ENCODE measurements at regions of chr11 and their contacts with region 1.

Region 1: GRCh38 chr11:120303004-120303637 is 22.0 kb upstream of the TLCD5 start:
- DNase-seq: peak; percentile 84
- ATAC-seq: peak; percentile 91
- H3K4me3 Mint-ChIP-seq: no peak overlapping the region
- H3K27ac Mint-ChIP-seq: no peak overlapping the region
- H3K4me1 Mint-ChIP-seq: no peaks in the 10 kb centered on the region
- H3K27me3 Mint-ChIP-seq: peaks cover 28% of the 10 kb centered on the region

Region 2: GRCh38 chr11:120137611-120138521 is 165.3 kb before region 1 on chr11 and contains the start of gene TRIM29:
- CTCF ChIA-PET with region 1: no interaction called
- POLR2A ChIA-PET with region 1: no interaction called
- DNase-seq: peak; percentile 16
- ATAC-seq: no peak
- H3K4me3 Mint-ChIP-seq: no peak within 1 kb of the TSS
- H3K27ac Mint-ChIP-seq: no peak within 1 kb of the TSS
- H3K4me1 Mint-ChIP-seq: no peaks in the 10 kb centered on the region
- H3K27me3 Mint-ChIP-seq: no peaks in the 10 kb centered on the region
- total RNA-seq, gene TRIM29: not detected

Region 3: DNA sequence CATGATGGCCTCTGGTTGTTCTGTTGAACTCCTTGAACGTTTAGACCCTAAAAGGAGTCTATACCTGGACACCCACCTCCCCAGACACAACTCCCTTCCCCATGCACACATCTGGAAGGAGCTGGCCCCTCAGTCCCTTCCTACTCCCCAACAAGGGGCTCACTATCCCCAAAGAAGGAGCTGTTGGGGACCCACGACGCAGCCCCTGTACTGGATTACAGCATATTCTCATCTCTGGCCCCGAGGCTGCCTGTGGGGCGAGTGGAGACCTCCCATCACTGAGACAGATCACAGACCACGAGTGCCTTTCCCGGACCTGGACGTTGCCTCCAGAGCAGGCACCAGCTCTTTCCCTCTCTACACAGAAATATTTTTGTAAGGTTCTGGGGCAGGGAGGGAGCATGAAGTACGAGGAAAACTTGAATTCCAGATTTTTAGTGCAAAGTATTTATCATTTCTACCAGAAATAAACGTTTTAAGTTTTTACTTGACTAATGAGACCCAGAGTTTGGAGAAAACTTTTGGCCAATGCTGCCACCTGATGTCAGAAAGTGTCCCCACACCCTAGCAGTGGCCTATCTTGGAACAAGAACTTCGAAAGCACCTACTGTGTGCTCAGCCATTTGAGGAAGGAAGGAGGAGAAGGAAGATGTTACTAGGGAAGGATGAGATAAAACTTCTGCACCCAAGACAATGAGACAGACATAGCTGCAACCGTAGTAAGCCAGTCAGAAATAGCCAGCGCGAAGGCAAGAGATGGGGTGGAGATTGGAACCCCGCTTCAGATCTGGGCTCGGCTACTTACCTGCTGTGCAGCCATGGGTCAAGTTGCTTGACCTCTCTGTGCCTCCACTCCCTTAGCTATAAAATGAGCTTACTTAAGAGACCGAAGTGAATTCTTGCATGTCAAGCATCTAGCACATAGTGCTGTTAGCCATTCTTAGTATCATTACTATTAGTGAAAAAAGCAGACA is 73.4 kb before region 1 on chr11:
- CTCF ChIA-PET with region 1: interaction called, 344 read pairs
- POLR2A ChIA-PET with region 1: interaction called, 3 read pairs
- DNase-seq: peak; percentile 38
- ATAC-seq: no peak
- H3K4me3 Mint-ChIP-seq: no peak overlapping the region
- H3K27ac Mint-ChIP-seq: no peak overlapping the region
- H3K4me1 Mint-ChIP-seq: peaks cover 11% of the 10 kb centered on the region
- H3K27me3 Mint-ChIP-seq: peaks cover 11% of the 10 kb centered on the region

Region 4: DNA sequence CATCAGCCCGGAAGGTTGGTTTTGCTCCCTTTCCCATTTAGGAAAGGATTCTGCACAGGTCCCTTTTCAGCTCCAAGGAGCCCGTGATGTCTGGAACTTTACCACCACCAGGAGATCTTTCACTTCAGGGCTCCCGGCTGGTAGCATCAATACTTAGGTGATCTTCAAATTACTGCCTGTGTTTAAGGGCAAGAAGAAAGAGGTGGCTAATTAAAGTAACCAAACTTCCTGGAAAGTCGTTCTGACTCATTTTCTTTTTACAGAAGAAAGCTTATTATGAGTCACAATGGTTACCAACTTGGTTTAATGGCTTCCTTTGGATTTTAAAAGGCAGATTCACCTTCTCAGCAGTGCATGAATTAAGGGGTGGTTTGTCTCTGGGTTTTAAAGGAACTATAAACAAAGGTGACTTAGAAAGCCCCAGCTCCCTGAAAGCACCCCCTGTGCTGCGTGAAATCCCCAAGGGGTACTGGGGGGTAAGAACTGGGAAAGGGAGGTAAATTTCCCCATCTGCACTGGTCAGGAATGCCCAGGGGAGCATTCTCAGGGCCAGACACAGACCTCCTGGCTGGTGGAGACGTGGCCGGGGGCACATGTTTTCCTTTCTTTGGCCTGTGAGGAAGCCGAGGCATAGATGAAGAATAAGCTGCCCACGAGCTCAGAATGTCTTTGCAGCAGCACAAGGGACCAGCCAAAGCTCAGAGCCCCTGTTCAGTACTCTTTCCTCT is 54.4 kb before region 1 on chr11:
- CTCF ChIA-PET with region 1: interaction called, 58 read pairs
- POLR2A ChIA-PET with region 1: no interaction called
- DNase-seq: peak; percentile 32
- ATAC-seq: peak; percentile 92
- H3K4me3 Mint-ChIP-seq: peak overlapping the region; percentile 70
- H3K27ac Mint-ChIP-seq: peak overlapping the region; percentile 78
- H3K4me1 Mint-ChIP-seq: peaks cover 63% of the 10 kb centered on the region
- H3K27me3 Mint-ChIP-seq: peaks cover 54% of the 10 kb centered on the region

Region 5: GRCh38 chr11:120289426-120289825 is 13.7 kb before region 1 on chr11:
- CTCF ChIA-PET with region 1: interaction called, 12 read pairs
- POLR2A ChIA-PET with region 1: no interaction called
- DNase-seq: no peak
- ATAC-seq: no peak
- H3K4me3 Mint-ChIP-seq: no peak overlapping the region
- H3K27ac Mint-ChIP-seq: no peak overlapping the region
- H3K4me1 Mint-ChIP-seq: peaks cover 3% of the 10 kb centered on the region
- H3K27me3 Mint-ChIP-seq: peaks cover 39% of the 10 kb centered on the region

Region 6: DNA sequence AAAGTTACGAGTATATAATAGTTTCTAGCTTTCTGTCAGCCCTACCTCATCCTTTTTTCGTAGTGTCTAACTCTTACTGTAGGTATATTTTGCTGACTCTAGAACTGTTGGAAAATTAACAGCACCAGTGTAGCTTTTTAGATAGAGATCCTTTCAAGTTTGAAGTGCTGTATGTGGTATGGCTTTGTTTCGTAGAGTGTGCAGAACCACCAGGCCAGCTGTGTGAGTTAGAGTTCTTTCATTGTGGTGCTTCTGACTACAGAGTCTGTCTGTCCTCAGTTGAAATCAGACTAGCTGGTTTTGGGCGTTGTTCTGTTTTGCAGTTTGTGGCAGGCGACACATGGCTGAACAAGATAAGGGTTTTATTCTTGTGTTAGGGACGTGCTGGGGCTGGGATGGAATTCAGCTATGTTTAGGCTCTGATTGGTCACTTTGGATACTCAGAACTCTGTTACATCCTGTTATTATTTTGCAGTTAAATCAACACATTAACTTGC is 36.3 kb after region 1 on chr11:
- CTCF ChIA-PET with region 1: interaction called, 11 read pairs
- POLR2A ChIA-PET with region 1: no interaction called
- DNase-seq: peak; percentile 26
- ATAC-seq: no peak
- H3K4me3 Mint-ChIP-seq: no peak overlapping the region
- H3K27ac Mint-ChIP-seq: no peak overlapping the region
- H3K4me1 Mint-ChIP-seq: peaks cover 44% of the 10 kb centered on the region
- H3K27me3 Mint-ChIP-seq: peaks cover 50% of the 10 kb centered on the region

Measured in activated CD8-positive, alpha-beta T cell treated with anti-CD3 and anti-CD28 coated beads, Interleukin-2, amount 10 ng/mL, durations not matched to agents 7 days and 5 days (primary cell).